Right ventricle myocardium superior (tissue), 1 donor: ENCODE measurements at regions of chr2 and their contacts with region 1.

Region 1: DNA sequence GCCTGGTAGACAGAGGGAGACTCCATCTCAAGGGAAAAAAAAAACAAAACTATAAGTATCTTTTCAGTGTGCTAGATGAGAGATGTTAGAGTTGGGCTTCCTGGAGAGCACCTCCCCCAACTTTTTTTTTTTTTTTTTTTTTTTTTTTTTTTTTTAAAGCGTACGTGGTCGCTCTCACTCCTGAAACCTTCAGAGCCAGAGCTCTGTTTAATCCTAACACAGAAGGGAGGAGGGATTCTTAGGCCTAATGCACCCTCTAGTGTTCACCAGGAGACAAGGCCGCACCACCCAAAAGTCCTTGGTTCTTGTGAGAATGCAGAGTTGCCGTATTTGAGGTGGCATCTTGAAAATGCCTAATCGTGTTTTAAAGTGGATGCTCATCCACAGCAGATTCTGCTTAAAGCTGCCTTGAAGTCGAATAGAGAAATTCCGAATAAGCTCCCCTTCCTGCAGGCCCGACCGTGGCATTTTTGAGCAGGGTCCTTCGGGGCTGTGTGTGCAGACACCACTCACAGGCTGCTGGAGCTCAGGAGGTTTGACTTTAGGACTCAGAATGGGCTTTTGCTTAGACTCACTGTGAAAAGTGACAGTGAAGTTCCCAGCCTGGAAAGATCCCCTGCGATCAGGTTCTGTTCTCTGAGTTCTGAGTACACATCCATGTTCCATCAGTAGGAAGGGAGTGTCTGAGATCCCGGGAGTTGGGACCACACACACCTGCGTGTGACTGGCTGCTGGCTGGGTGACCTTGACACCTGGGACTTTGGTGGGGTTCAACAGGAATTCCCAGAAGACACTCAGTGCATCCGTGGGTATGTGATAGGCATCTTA is 252.6 kb downstream of the AGAP1 start:
- DNase-seq: no peak
- ATAC-seq: peak; percentile 92

Region 2: DNA sequence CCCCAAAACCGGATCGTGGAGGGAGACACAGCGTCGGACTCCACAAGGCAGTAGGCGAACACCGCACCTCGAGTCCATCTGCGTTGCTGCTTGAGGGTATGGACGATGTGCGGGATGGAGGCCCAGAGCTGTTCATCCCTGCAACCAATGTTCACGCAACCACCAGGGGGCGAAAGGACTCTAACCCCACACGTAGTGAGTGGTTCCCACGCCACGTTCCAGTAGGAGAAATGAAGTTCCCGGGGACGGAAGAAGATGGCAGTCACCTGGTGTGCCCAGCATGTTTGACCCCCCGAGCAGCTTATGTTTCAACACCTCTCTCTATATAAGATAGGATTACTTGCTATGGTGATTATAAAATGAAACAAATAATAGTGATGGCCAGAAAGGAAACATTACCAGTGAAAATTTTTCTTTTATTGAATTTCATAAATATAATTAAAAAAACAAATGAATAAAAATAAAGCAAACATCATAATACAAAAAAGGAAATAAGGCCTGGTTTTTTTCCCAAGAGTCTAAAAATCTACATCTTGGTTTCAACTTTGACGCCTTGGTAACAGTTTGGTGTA is 610.4 kb before region 1 on chr2:
- intact Hi-C with region 1: loop called (anchors 5 kb)
- DNase-seq: peak; percentile 85
- ATAC-seq: peak; percentile 94

Region 3: GRCh38 chr2:235669269-235669831 is 77.1 kb before region 1 on chr2:
- intact Hi-C with region 1: loop called (anchors 10 kb)
- DNase-seq: peak; percentile 79
- ATAC-seq: peak; percentile 80